OCI-LY7 (cell line): ENCODE measurements at regions of chr11 and their contacts with region 1.

Region 1: GRCh38 chr11:122781378-122782195 is 56.7 kb upstream of the CRTAM start:
- DNase-seq: peak; percentile 78
- H3K4me3 ChIP-seq: no peak overlapping the region
- H3K27ac ChIP-seq: no peak overlapping the region
- H3K4me1 ChIP-seq: no peaks in the 10 kb centered on the region
- CTCF ChIP-seq: peak; percentile 96

Region 2: GRCh38 chr11:122578168-122578825 is 203.3 kb before region 1 on chr11:
- CTCF ChIA-PET with region 1: no interaction called
- POLR2A ChIA-PET with region 1: no interaction called
- intact Hi-C with region 1: loop called (anchors 2 kb)
- DNase-seq: peak; percentile 6
- H3K4me3 ChIP-seq: no peak overlapping the region
- H3K27ac ChIP-seq: no peak overlapping the region
- H3K4me1 ChIP-seq: peaks cover 3% of the 10 kb centered on the region
- CTCF ChIP-seq: peak; percentile 54

Region 3: GRCh38 chr11:122628810-122629555 is 152.6 kb before region 1 on chr11:
- CTCF ChIA-PET with region 1: interaction called, 10 read pairs
- POLR2A ChIA-PET with region 1: interaction called, 4 read pairs
- intact Hi-C with region 1: loop called (anchors 1 kb)
- DNase-seq: peak; percentile 85
- H3K4me3 ChIP-seq: no peak overlapping the region
- H3K27ac ChIP-seq: no peak overlapping the region
- H3K4me1 ChIP-seq: peaks cover 10% of the 10 kb centered on the region
- CTCF ChIP-seq: peak; percentile 94

Region 4: GRCh38 chr11:123006860-123007542 is 225.4 kb after region 1 on chr11:
- CTCF ChIA-PET with region 1: no interaction called
- POLR2A ChIA-PET with region 1: no interaction called
- intact Hi-C with region 1: no loop called
- DNase-seq: no peak
- H3K4me3 ChIP-seq: no peak overlapping the region
- H3K27ac ChIP-seq: no peak overlapping the region
- H3K4me1 ChIP-seq: no peaks in the 10 kb centered on the region
- CTCF ChIP-seq: no peak